ENCODE measurements at regions of chr2 and their contacts with region 1.

Region 1: GRCh38 chr2:187453078-187453641 is 5.1 kb upstream of the CALCRL start:
- DNase-seq: no peak
- CTCF ChIP-seq: peak; percentile 39

Region 2: DNA sequence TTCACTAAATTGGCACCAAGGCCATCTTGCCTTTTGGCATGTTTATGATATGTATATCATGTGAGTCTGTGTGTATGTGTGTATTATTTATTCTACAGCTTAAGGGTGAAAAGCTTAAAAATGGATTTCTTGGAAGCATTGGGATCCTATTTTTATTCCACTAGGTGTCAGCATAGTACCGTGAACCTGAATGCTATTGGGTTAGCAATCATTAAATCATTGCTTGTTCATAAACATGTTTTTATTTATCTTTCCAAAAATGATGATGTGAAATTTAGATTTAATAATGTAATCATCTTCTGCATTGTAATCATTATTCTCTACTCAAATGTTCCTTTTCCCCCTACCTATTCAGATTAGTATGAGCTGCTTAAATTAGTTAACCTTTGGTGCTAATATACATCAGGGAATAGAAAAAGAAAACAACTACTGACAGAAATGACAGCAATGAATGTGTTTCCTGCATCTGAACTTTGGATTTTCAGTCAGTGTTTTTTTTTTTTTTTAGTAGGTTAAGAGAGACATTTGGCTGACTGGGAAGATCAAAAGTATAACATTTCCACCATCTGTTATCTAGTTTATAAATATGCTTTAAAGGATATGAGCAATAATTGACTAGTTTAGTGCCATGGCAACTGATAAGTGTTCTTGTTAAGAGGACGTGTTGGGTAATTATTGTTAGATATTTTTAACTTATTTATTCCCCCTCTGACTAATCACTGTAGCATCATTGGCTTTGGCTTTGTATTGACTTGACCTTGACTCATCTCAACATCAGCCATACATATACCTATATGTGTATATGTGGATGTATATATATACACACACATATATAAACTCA is 590.1 kb before region 1 on chr2:
- in situ Hi-C with region 1: loop called (anchors 25 kb)
- DNase-seq: peak; percentile 12
- CTCF ChIP-seq: peak; percentile 53